OCI-LY7 (cell line): ENCODE measurements at regions of chr2 and their contacts with region 1.

Region 1: GRCh38 chr2:79219383-79219988 is 59.9 kb upstream of the REG3A start:
- DNase-seq: peak; percentile 73
- H3K4me3 ChIP-seq: no peak overlapping the region
- H3K27ac ChIP-seq: no peak overlapping the region
- H3K4me1 ChIP-seq: no peaks in the 10 kb centered on the region
- CTCF ChIP-seq: peak; percentile 95

Region 2: GRCh38 chr2:78521938-78522337 is 697.5 kb before region 1 on chr2:
- CTCF ChIA-PET with region 1: no interaction called
- POLR2A ChIA-PET with region 1: no interaction called
- intact Hi-C with region 1: no loop called
- DNase-seq: no peak
- H3K4me3 ChIP-seq: no peak overlapping the region
- H3K27ac ChIP-seq: no peak overlapping the region
- H3K4me1 ChIP-seq: no peaks in the 10 kb centered on the region
- CTCF ChIP-seq: no peak

Region 3: DNA sequence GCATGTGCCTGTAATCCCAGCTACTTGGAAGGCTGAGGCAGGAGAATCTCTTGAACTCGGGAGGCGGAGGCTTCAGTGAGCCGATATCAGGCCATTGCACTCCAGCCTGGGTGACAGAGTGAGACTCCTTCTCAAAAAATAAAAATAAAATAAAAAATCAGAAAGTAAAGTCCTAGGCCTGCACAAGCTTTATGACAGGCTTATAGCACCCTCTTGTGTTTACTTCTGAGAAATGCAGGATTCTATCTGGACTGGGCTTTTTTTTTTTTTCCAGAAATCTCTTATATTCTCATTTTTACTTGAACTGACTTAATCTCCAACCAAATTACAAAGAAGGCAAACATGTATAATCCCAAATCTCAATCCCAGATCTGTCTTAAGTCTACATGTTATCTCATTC is 220.1 kb before region 1 on chr2:
- CTCF ChIA-PET with region 1: no interaction called
- POLR2A ChIA-PET with region 1: no interaction called
- intact Hi-C with region 1: loop called (anchors 2 kb)
- DNase-seq: peak; percentile 65
- H3K4me3 ChIP-seq: no peak overlapping the region
- H3K27ac ChIP-seq: no peak overlapping the region
- H3K4me1 ChIP-seq: peaks cover 17% of the 10 kb centered on the region
- CTCF ChIP-seq: peak; percentile 82

Region 4: DNA sequence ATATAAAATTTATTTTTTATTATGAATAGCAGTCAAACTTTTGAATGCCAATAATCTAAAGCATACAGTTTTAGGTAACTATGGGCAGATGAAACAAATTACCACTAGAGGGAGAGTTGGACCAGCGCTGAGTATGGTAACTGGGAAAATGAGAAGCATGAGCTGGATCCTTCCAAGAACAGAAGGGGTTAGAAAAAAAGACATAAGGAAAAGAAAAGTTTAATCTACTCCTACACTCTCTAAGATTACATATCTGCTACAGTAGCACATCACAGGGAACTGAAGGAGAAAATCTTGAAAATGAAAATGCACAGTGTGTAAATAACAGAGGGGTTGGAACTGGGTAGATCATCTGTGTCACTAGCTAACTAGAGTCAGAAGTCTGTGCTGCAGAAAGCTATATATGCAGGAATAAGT is 178.4 kb before region 1 on chr2:
- CTCF ChIA-PET with region 1: no interaction called
- POLR2A ChIA-PET with region 1: no interaction called
- intact Hi-C with region 1: loop called (anchors 1 kb)
- DNase-seq: peak; percentile 37
- H3K4me3 ChIP-seq: no peak overlapping the region
- H3K27ac ChIP-seq: no peak overlapping the region
- H3K4me1 ChIP-seq: peaks cover 4% of the 10 kb centered on the region
- CTCF ChIP-seq: peak; percentile 86

Region 5: GRCh38 chr2:79887747-79888374 is 668.4 kb after region 1 on chr2:
- CTCF ChIA-PET with region 1: no interaction called
- POLR2A ChIA-PET with region 1: no interaction called
- intact Hi-C with region 1: loop called (anchors 10 kb)
- DNase-seq: peak; percentile 57
- H3K4me3 ChIP-seq: no peak overlapping the region
- H3K27ac ChIP-seq: no peak overlapping the region
- H3K4me1 ChIP-seq: no peaks in the 10 kb centered on the region
- CTCF ChIP-seq: peak; percentile 87